Ascending aorta (tissue), 2 donors: ENCODE measurements at regions of chrX and their contacts with region 1.

Region 1: GRCh38 chrX:134807039-134807731 is 148.9 kb upstream of the PLAC1 start:
- DNase-seq: peak; percentile 55 to 94
- H3K4me3 ChIP-seq: peak overlapping the region; percentile 32 to 61
- H3K27ac ChIP-seq: peak overlapping the region; percentile 58 to 70
- H3K4me1 ChIP-seq: no peaks in the 10 kb centered on the region
- H3K27me3 ChIP-seq: no peaks in the 10 kb centered on the region
- CTCF ChIP-seq: no peak

Region 2: GRCh38 chrX:134460005-134460861 is 347.0 kb before region 1 on chrX and contains the start of gene HPRT1:
- intact Hi-C with region 1: loop called (anchors 10 kb)
- DNase-seq: peak; percentile 16 to 88
- H3K4me3 ChIP-seq: peak within 1 kb of the TSS; percentile 70 to 81
- H3K27ac ChIP-seq: peak within 1 kb of the TSS; percentile 71 to 80
- H3K4me1 ChIP-seq: no peaks in the 10 kb centered on the region
- H3K27me3 ChIP-seq: no peaks in the 10 kb centered on the region
- CTCF ChIP-seq: no peak
- total RNA-seq, gene HPRT1: 20.3 TPM

Region 3: DNA sequence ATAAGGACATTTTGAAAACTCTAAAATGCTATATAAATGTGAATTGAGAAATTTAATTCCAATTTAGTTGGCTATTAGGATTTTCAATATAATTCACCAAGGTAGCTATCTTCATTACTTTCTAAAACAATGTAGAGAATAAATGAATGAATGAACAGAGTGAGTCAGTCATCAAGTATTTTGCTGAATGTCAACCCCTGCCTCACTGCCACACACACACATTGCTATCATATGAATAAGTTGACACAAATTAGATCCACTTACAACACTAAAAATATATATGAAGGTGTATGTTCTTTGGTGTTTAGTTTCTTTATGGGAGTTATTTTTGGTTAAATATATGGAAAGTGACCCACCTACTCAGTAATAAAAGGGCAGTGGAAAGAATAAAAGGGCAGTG is 42.2 kb after region 1 on chrX:
- intact Hi-C with region 1: no loop called
- DNase-seq: no peak
- H3K4me3 ChIP-seq: no peak overlapping the region
- H3K27ac ChIP-seq: no peak overlapping the region
- H3K4me1 ChIP-seq: no peaks in the 10 kb centered on the region
- H3K27me3 ChIP-seq: no peaks in the 10 kb centered on the region
- CTCF ChIP-seq: no peak